Heart left ventricle (tissue), 16 donors: ENCODE measurements at regions of chr6 and their contacts with region 1.

Region 1: DNA sequence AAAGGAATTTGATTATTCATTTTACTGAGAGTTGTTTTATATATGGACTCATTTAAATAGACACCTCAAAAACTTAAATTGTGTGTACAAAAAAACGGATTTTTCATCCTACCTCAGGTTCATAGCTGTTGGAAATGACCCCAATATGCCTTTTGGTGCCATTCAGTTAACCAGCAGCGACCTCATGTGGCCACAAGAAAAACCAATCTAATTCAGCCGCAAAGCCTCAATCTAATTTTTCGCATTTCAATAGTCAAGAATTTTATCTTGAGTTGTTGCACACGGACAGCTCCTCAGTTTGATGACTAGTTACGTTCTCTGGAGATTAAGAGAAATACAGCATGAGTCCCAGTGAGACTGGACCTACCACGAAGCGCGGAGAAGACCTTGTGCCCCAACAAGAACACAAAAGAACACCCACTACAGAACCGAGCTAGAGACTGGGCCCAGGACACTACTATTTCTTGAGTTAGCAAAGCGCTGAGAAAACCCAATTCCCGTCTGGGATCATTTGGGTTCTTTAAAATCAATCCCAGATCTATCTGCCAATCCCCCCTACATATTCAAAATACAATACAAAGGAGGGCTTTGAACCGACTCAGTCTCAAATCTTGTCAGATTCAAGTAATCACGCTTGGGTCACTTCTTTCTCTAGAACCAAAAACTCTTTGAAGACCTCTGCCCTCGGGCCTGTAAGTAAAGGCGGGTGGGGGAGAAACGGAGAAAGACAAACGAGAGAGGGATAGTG is 1.1 kb downstream of the TCP11 start:
- DNase-seq: peak in 3 of 5 donors; percentile 47 to 58 (median 49)
- ATAC-seq: peak in 2 of 4 donors; percentile 53 to 62
- H3K4me3 ChIP-seq: no peak overlapping the region
- H3K27ac ChIP-seq: no peak overlapping the region
- H3K4me1 ChIP-seq: peaks cover 0 to 19% (median 3%) of the 10 kb centered on the region in 12 donors
- H3K27me3 ChIP-seq: peaks cover 0 to 8% (median 0%) of the 10 kb centered on the region in 9 donors
- CTCF ChIP-seq: peak; percentile 73 to 94 (median 85)
- POLR2A ChIP-seq: no peak

Region 2: GRCh38 chr6:34459899-34460593 is 680.0 kb before region 1 on chr6:
- intact Hi-C with region 1: loop called in 1 of 10 experiments (anchors 10 kb)
- DNase-seq: no peak
- ATAC-seq: peak in 2 of 4 donors; percentile 48 to 52
- H3K4me3 ChIP-seq: no peak overlapping the region
- H3K27ac ChIP-seq: no peak overlapping the region
- H3K4me1 ChIP-seq: peaks cover 0 to 12% (median 0%) of the 10 kb centered on the region in 12 donors
- H3K27me3 ChIP-seq: peaks cover 0 to 15% (median 0%) of the 10 kb centered on the region in 9 donors
- CTCF ChIP-seq: peak; percentile 47 to 77 (median 60)
- POLR2A ChIP-seq: no peak

Region 3: DNA sequence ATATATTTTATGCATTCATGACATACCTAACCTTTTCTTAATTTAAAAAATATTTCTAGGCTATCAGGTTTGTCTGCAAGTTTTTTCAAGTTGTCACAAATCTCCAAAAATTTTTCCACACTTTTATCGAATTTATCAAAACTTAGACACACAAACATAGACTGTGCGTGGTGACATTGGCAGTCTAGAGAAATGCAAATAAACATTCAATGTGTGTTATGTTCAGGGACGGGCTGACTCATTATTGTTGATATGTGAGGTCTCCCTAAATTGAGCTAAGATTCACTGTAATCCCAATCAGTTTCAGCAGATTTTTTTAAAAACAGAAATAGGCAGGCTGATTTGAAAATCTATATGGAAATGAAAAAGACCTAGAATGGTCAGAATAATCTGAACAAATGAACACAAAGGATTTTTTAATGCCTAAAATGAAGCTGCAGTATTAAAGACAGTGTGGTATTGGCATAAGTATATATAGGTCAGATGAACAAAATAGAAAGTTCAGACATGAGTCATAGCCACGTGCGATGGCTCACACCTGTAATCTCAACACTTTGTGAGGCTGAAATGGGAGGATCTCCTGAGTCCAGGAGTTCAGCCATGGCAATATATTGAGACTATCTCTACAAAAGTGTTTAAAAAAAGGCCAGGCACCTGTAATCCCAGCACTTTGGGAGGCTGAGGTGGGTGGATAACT is 329.0 kb before region 1 on chr6:
- intact Hi-C with region 1: no loop called
- DNase-seq: no peak
- ATAC-seq: peak in 2 of 4 donors; percentile 36 to 42
- H3K4me3 ChIP-seq: no peak overlapping the region
- H3K27ac ChIP-seq: no peak overlapping the region
- H3K4me1 ChIP-seq: peaks cover 0 to 49% (median 17%) of the 10 kb centered on the region in 12 donors
- H3K27me3 ChIP-seq: no peaks in the 10 kb centered on the region
- CTCF ChIP-seq: no peak
- POLR2A ChIP-seq: no peak

Region 4: DNA sequence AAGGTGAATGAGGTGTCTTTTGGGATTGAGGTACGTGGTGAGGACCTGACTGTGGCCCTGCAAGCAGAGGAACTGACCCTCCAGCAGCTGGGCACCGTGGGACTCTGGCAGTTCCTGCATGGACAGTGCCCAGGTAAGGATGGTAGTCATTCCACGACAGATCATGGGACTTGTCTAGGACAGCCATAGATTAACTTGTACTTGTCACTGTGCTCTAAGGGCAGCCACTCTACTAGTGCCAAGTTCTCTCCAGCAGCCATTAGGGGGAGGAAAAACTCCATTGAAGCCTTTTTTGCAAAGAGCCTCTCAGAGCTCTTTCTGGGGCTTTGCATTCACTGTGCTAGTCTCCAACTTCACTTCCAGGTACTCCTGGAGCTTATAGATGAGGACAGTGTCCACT is 272.6 kb before region 1 on chr6:
- intact Hi-C with region 1: loop called in 4 of 10 experiments (anchors 5 to 10 kb)
- DNase-seq: no peak
- ATAC-seq: peak; percentile 30 to 63 (median 49)
- H3K4me3 ChIP-seq: no peak overlapping the region
- H3K27ac ChIP-seq: peak overlapping the region in 6 of 12 donors; percentile 17 to 58 (median 40)
- H3K4me1 ChIP-seq: peaks cover 0 to 35% (median 9%) of the 10 kb centered on the region in 12 donors
- H3K27me3 ChIP-seq: no peaks in the 10 kb centered on the region
- CTCF ChIP-seq: peak in 8 of 12 donors; percentile 18 to 43 (median 26)
- POLR2A ChIP-seq: no peak

Region 5: DNA sequence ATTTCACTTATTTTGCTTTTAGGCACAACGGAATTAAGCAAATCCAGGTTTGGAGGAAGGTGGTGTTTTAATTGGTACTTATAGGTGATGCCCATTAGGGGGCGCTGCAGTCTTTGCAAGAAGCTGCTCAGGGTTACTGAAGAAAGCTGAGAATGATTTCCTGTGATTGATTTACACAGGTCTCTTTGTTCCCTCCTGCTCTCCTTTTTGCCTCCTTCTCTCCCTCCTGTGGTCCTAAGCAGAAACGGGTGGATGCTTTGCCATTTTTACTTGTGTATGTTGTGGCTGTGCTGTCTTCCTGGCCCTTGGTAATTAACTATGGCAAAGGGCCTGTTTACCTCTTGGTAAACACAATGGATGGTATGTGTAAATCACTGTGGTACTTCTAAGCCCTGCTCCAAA is 153.2 kb before region 1 on chr6:
- intact Hi-C with region 1: loop called (anchors 1 to 2 kb)
- DNase-seq: peak in 4 of 5 donors; percentile 58 to 78 (median 68)
- ATAC-seq: peak; percentile 56 to 86 (median 83)
- H3K4me3 ChIP-seq: no peak overlapping the region
- H3K27ac ChIP-seq: peak overlapping the region in 2 of 12 donors; percentile 15 to 61
- H3K4me1 ChIP-seq: peaks cover 0 to 12% (median 7%) of the 10 kb centered on the region in 12 donors
- H3K27me3 ChIP-seq: no peaks in the 10 kb centered on the region
- CTCF ChIP-seq: peak; percentile 77 to 96 (median 88)
- POLR2A ChIP-seq: no peak

Region 6: GRCh38 chr6:35202066-35202546 is 62.0 kb after region 1 on chr6:
- intact Hi-C with region 1: loop called in 4 of 10 experiments (anchors 5 to 10 kb)
- DNase-seq: peak in 3 of 5 donors; percentile 20 to 63 (median 31)
- ATAC-seq: peak; percentile 71 to 83 (median 77)
- H3K4me3 ChIP-seq: no peak overlapping the region
- H3K27ac ChIP-seq: peak overlapping the region in 4 of 12 donors; percentile 10 to 46 (median 26)
- H3K4me1 ChIP-seq: peaks cover 0 to 24% (median 2%) of the 10 kb centered on the region in 12 donors
- H3K27me3 ChIP-seq: no peaks in the 10 kb centered on the region
- CTCF ChIP-seq: no peak
- POLR2A ChIP-seq: no peak